ENCODE measurements at regions of chr10 and their contacts with region 1.

Region 1: GRCh38 chr10:73647191-73647874 is 6.1 kb upstream of the MYOZ1 start:
- DNase-seq: no peak
- H3K4me3 ChIP-seq: peak overlapping the region; percentile 64
- CTCF ChIP-seq: no peak

Region 2: DNA sequence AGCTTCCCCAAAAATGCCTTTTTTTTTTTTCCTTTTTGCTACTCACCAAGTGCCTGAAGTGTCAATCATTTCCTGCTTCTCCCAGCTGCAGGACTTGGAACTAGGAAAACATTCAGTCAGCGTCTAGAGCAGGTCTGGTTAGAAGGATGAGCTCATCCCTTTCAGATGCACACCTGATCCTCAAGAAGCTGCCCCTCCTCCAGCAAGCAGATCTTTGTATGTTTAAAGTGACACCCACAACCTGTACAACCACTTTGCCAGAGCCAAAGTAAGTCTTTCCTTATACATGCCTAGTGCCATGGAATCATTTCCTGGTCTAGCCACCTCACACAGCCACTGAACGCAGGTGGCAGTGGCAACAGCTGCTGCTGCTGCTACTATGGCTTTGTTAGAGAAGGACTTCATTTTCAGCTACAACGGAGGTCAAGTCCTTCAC is 45.8 kb before region 1 on chr10:
- in situ Hi-C with region 1: loop called (anchors 5 kb)
- DNase-seq: no peak
- H3K4me3 ChIP-seq: no peak overlapping the region
- CTCF ChIP-seq: no peak